Caco-2 (cell line): ENCODE measurements at regions of chr2 and their contacts with region 1.

Region 1: GRCh38 chr2:96509114-96509846 is 4.1 kb upstream of the NEURL3 start:
- DNase-seq: peak; percentile 88 to 94
- H3K4me3 ChIP-seq: no peak overlapping the region
- H3K4me3 Mint-ChIP-seq: peak overlapping the region; percentile 45
- H3K27ac Mint-ChIP-seq: peak overlapping the region; percentile 61
- H3K4me1 ChIP-seq: peaks cover 35% of the 10 kb centered on the region
- H3K4me1 Mint-ChIP-seq: peaks cover 21% of the 10 kb centered on the region
- H3K27me3 ChIP-seq: no peaks in the 10 kb centered on the region
- H3K27me3 Mint-ChIP-seq: peaks cover 3% of the 10 kb centered on the region
- CTCF ChIP-seq: peak; percentile 97 to 98

Region 2: DNA sequence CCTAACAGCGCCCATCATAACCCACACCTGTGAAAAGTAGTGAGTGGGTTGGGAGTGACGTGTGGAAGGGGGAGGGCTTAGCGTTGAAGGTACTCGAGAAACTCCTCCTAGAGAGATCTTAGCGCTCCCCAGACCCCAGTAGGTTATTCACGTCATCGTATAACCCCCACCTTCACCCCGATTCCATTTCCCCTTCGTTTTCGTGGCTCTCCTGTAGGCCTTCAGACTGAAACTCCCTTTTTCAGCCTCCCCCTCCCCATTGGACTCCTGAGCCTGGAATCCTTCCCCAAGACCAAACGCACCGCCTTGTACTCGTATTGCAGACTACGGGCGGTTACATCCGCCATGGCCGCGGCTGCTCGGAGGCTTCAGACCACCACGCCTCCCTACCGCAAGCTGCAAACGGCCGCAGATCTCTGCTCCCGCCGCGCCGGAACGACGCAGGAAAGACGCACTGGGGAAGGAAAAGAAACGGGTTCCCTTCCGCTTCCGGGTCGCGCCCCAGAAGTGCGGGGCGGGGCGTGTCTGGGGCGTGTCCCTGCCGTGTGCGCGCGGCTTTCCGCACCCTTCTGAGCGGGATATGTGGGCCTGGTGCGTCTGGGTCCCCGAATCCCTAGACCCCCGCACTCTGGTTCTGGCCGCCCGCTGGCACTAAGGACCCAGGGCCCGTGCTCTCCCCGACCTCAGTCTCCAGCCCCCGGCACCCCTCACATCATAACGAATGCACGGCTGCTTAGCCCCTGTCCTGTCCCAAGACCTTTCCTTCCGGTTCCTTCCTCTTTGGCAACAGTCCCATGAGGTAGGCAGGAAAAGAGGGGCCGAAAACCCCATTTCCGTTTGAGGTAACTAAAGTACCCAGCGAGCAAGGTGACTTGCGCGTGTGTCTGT is 203.9 kb before region 1 on chr2 and contains the start of gene SNRNP200:
- CTCF ChIA-PET with region 1: no interaction called
- POLR2A ChIA-PET with region 1: no interaction called
- intact Hi-C with region 1: loop called (anchors 1 kb)
- DNase-seq: peak; percentile 91
- H3K4me3 ChIP-seq: peak within 1 kb of the TSS; percentile 51
- H3K4me3 Mint-ChIP-seq: peak within 1 kb of the TSS; percentile 96
- H3K27ac Mint-ChIP-seq: peak within 1 kb of the TSS; percentile 99
- H3K4me1 ChIP-seq: no peaks in the 10 kb centered on the region
- H3K4me1 Mint-ChIP-seq: peaks cover 17% of the 10 kb centered on the region
- H3K27me3 ChIP-seq: no peaks in the 10 kb centered on the region
- H3K27me3 Mint-ChIP-seq: no peaks in the 10 kb centered on the region
- CTCF ChIP-seq: no peak
- total RNA-seq, gene SNRNP200: 240 and 259 TPM in 2 replicates

Region 3: DNA sequence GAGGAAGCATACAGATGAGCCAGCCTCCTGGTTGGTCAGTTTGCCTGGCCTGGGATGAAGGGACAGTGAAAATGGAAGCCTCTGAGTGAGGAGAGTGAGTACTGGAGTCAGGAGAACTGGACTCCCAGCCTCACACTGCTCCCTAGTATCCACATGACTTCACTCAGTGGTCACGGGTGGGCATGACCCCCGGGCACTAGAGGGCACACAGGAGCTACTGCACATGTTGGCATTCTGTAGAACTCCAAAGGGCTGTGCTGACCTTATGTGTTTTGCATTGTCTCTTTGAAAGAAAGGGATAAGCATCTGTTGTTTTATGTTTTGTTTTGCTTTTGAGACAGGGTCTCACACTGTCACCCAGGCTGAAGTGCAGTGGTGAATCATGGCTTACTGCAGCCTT is 150.0 kb before region 1 on chr2:
- CTCF ChIA-PET with region 1: no interaction called
- POLR2A ChIA-PET with region 1: no interaction called
- intact Hi-C with region 1: loop called (anchors 1 kb)
- DNase-seq: peak in 1 of 2 experiments; percentile 21
- H3K4me3 ChIP-seq: no peak overlapping the region
- H3K4me3 Mint-ChIP-seq: no peak overlapping the region
- H3K27ac Mint-ChIP-seq: no peak overlapping the region
- H3K4me1 ChIP-seq: no peaks in the 10 kb centered on the region
- H3K4me1 Mint-ChIP-seq: no peaks in the 10 kb centered on the region
- H3K27me3 ChIP-seq: no peaks in the 10 kb centered on the region
- H3K27me3 Mint-ChIP-seq: no peaks in the 10 kb centered on the region
- CTCF ChIP-seq: peak in 1 of 2 experiments; percentile 20

Region 4: GRCh38 chr2:96407041-96407918 is 102.0 kb before region 1 on chr2:
- CTCF ChIA-PET with region 1: interaction called, 113 read pairs
- POLR2A ChIA-PET with region 1: interaction called, 4 read pairs
- intact Hi-C with region 1: loop called (anchors 1 kb)
- DNase-seq: peak; percentile 64 to 71
- H3K4me3 ChIP-seq: no peak overlapping the region
- H3K4me3 Mint-ChIP-seq: no peak overlapping the region
- H3K27ac Mint-ChIP-seq: no peak overlapping the region
- H3K4me1 ChIP-seq: peaks cover 28% of the 10 kb centered on the region
- H3K4me1 Mint-ChIP-seq: peaks cover 20% of the 10 kb centered on the region
- H3K27me3 ChIP-seq: no peaks in the 10 kb centered on the region
- H3K27me3 Mint-ChIP-seq: no peaks in the 10 kb centered on the region
- CTCF ChIP-seq: peak; percentile 89 to 90

Region 5: DNA sequence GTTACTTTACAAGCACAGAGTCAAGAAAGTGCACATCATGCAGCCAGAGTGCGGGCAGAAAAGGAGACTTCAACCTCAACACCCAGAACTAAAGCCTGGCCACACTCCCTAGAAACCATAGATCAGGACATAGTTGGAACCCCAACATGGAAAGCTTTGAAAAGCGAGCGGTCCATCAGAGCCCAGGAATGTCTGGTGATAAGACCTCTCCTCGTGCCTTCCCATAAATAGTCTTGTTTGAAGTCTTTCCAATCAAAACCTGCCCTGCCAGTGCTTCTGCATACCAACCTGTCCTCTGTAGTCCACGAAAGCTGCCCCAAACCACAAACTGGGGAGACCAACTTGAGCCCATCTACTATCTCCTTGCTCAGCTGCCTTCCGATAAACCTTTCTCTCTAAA is 59.6 kb before region 1 on chr2:
- CTCF ChIA-PET with region 1: interaction called, 7 read pairs
- POLR2A ChIA-PET with region 1: no interaction called
- intact Hi-C with region 1: loop called (anchors 1 kb)
- DNase-seq: peak; percentile 70 to 79
- H3K4me3 ChIP-seq: no peak overlapping the region
- H3K4me3 Mint-ChIP-seq: peak overlapping the region; percentile 20
- H3K27ac Mint-ChIP-seq: peak overlapping the region; percentile 79
- H3K4me1 ChIP-seq: peaks cover 26% of the 10 kb centered on the region
- H3K4me1 Mint-ChIP-seq: peaks cover 20% of the 10 kb centered on the region
- H3K27me3 ChIP-seq: no peaks in the 10 kb centered on the region
- H3K27me3 Mint-ChIP-seq: no peaks in the 10 kb centered on the region
- CTCF ChIP-seq: no peak

Region 6: GRCh38 chr2:96536445-96537065 is 27.3 kb after region 1 on chr2 and contains the start of gene ARID5A:
- CTCF ChIA-PET with region 1: no interaction called
- POLR2A ChIA-PET with region 1: no interaction called
- intact Hi-C with region 1: loop called (anchors 2 kb)
- DNase-seq: peak; percentile 92
- H3K4me3 ChIP-seq: peak within 1 kb of the TSS; percentile 57
- H3K4me3 Mint-ChIP-seq: peak within 1 kb of the TSS; percentile 87
- H3K27ac Mint-ChIP-seq: no peak within 1 kb of the TSS
- H3K4me1 ChIP-seq: peaks cover 7% of the 10 kb centered on the region
- H3K4me1 Mint-ChIP-seq: peaks cover 5% of the 10 kb centered on the region
- H3K27me3 ChIP-seq: no peaks in the 10 kb centered on the region
- H3K27me3 Mint-ChIP-seq: no peaks in the 10 kb centered on the region
- CTCF ChIP-seq: peak; percentile 26 to 72
- total RNA-seq, gene ARID5A: 3.0 and 3.3 TPM in 2 replicates